ENCODE measurements at regions of chr17 and their contacts with region 1.

Region 1: DNA sequence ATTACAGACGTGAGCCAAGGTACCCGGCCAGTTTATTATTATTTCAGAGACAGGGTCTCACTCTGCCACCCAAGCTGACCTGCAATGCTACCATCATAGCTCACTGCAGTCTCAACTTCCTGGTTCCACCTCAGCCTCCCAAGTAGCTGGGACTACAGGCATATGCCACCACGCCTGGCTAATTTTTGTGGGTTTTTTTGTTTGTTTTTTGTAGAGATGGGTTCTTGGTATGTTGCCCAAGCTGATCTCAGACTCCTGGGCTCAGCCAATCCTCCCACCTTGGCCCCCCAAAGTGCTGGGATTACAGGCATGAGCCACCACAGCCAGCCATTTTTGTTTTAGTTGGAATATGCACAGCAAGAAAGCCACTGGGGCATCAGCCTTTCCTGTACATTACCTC is 115.7 kb downstream of the MRM1 start:
- DNase-seq: no peak
- H3K4me3 Mint-ChIP-seq: no peak overlapping the region
- H3K27ac Mint-ChIP-seq: no peak overlapping the region
- H3K4me1 Mint-ChIP-seq: no peaks in the 10 kb centered on the region
- H3K27me3 Mint-ChIP-seq: peaks cover 76% of the 10 kb centered on the region
- CTCF ChIP-seq: no peak

Region 2: GRCh38 chr17:36742267-36743000 is 25.3 kb after region 1 on chr17:
- CTCF ChIA-PET with region 1: interaction called, 15 read pairs
- intact Hi-C with region 1: no loop called
- DNase-seq: no peak
- H3K4me3 Mint-ChIP-seq: no peak overlapping the region
- H3K27ac Mint-ChIP-seq: no peak overlapping the region
- H3K4me1 Mint-ChIP-seq: no peaks in the 10 kb centered on the region
- H3K27me3 Mint-ChIP-seq: peaks cover 92% of the 10 kb centered on the region
- CTCF ChIP-seq: no peak

Region 3: GRCh38 chr17:36777118-36777517 is 60.0 kb after region 1 on chr17:
- CTCF ChIA-PET with region 1: no interaction called
- intact Hi-C with region 1: loop called (anchors 10 kb)
- DNase-seq: no peak
- H3K4me3 Mint-ChIP-seq: no peak overlapping the region
- H3K27ac Mint-ChIP-seq: no peak overlapping the region
- H3K4me1 Mint-ChIP-seq: no peaks in the 10 kb centered on the region
- H3K27me3 Mint-ChIP-seq: peaks cover 100% of the 10 kb centered on the region
- CTCF ChIP-seq: no peak